Endothelial cell of umbilical vein (primary cell): ENCODE measurements at regions of chr15 and their contacts with region 1.

Region 1: GRCh38 chr15:94230956-94231722 is at the start of gene MCTP2:
- DNase-seq: peak; percentile 7
- H3K4me3 ChIP-seq: peak within 1 kb of the TSS; percentile 2 to 25 (median 17)
- H3K27ac ChIP-seq: no peak within 1 kb of the TSS
- H3K4me1 ChIP-seq: no peaks in the 10 kb centered on the region
- H3K27me3 ChIP-seq: peaks cover 0 to 4% of the 10 kb centered on the region in 2 experiments
- CTCF ChIP-seq: no peak
- POLR2A ChIP-seq: no peak
- total RNA-seq, gene MCTP2: 0.75 and 1.6 TPM in 2 replicates

Region 2: DNA sequence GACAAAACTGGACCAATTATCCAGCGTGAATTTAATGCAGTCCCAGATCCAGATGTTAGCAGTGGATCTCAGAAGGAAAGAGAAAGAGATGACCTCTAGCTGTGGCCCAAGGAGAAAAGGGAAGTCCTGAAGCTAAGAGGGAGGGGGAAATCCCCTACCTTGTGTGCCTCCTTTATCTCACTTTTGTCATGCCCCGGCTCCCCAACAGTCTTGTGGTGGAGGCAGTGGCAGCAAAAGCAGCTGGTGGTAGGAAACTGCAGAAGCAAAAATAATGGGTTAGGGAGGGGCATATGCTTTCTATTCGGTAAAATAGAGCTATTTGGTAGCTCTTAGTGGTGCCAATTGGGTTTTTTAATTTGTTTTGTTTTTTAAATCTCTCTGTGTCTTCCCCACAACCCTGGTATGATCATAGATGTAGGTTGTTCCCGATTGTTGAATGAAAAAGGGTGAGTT is 56.7 kb after region 1 on chr15:
- CTCF ChIA-PET with region 1: no interaction called
- POLR2A ChIA-PET with region 1: no interaction called
- dilution Hi-C with region 1: no loop called
- intact Hi-C with region 1: loop called (anchors 5 kb)
- DNase-seq: no peak
- H3K4me3 ChIP-seq: no peak overlapping the region
- H3K27ac ChIP-seq: no peak overlapping the region
- H3K4me1 ChIP-seq: no peaks in the 10 kb centered on the region
- H3K27me3 ChIP-seq: no peaks in the 10 kb centered on the region
- CTCF ChIP-seq: no peak
- POLR2A ChIP-seq: no peak